PC-9 (cell line): ENCODE measurements at regions of chr4 and their contacts with region 1.

Region 1: DNA sequence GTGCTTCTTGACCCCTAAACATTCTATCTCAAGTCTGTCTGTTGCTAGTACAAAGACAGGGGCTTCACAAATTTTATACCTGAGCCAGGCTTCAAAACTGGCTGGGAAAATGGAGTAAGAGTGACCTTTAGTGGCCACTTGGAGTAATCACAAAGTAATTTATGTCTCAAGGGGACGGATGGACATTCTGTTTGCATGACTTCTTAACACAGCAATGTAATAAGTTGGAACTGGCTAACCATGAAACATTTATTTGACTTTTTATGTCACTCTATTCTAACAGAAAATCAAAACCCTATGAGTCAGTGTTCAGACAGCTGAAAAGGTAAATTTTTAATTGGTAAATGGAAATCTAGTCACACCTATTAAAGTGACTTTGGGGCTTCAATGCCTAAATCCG is 600.6 kb downstream of the ANKRD50 start:
- DNase-seq: peak in 1 of 2 experiments; percentile 64
- H3K4me3 ChIP-seq: no peak overlapping the region
- H3K27ac ChIP-seq: no peak overlapping the region
- H3K4me1 ChIP-seq: no peaks in the 10 kb centered on the region
- H3K27me3 ChIP-seq: no peaks in the 10 kb centered on the region
- CTCF ChIP-seq: peak; percentile 91

Region 2: DNA sequence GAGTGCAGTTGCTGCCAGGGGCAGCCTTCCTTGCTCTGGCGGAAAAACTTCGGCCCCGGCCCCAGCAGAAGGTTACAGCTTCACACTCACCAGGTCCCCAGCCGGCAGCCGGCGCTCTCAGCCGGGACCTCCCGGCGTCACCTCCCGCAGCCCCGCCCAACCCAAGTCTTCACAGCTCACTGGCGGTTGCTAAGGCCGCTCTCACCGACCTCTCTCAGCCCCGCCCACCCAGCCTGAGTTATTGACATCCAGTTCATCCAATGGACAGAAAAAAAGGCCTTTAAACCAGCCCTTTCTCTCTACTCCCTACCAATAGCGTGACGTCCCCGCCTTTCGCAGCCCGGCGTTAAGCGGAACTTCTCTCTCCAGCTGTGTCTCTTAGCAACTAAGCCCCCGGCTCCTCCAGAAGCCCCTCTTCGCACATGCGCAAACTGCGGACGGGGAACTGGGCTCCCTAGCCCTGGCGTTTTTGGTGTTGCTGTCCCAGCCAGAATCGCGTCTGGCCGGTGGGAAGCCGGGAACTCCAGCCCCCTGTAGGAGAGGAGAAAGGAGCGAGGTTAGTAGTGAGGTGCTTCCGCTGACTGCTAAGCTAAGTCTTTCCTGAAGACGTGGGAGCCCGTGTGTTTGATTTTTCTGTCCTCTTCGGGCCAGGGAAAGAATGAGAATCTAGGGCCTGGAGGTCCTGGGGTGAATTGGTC is 1379.4 kb before region 1 on chr4 and contains the start of gene BBS12:
- CTCF ChIA-PET with region 1: no interaction called
- POLR2A ChIA-PET with region 1: no interaction called
- intact Hi-C with region 1: loop called (anchors 10 kb)
- DNase-seq: peak; percentile 99
- H3K4me3 ChIP-seq: peak within 1 kb of the TSS; percentile 62
- H3K27ac ChIP-seq: peak within 1 kb of the TSS; percentile 47
- H3K4me1 ChIP-seq: peaks cover 19% of the 10 kb centered on the region
- H3K27me3 ChIP-seq: no peaks in the 10 kb centered on the region
- CTCF ChIP-seq: no peak; the same call in 1 of the 2 replicates
- total RNA-seq, gene BBS12: 2.9 and 4.9 TPM in 2 replicates

Region 3: DNA sequence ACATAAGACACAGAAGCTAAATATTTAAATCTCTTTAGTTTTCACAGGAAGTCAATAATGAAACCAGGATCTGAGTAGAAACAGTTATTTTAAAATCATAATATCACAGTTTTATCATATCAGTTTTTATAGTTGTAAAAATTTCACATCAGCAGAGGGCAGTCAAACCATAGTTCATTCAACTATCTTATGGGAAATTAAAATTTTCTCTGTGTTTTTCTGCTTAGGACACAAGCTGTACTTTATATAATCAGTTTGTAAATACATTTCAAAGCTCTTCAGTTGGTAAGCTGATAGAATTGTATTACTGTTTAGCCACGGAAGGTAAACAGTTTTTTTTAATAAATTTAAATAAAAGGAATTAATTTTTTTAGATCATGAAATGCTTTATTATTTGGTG is 984.7 kb before region 1 on chr4:
- CTCF ChIA-PET with region 1: no interaction called
- POLR2A ChIA-PET with region 1: no interaction called
- intact Hi-C with region 1: loop called (anchors 5 kb)
- DNase-seq: peak in 1 of 2 experiments; percentile 30
- H3K4me3 ChIP-seq: no peak overlapping the region
- H3K27ac ChIP-seq: no peak overlapping the region
- H3K4me1 ChIP-seq: peaks cover 4% of the 10 kb centered on the region; the same call in 1 of the 2 replicates
- H3K27me3 ChIP-seq: no peaks in the 10 kb centered on the region
- CTCF ChIP-seq: peak; percentile 62

Region 4: GRCh38 chr4:123396307-123397143 is 715.4 kb before region 1 on chr4 and contains the start of gene SPRY1:
- CTCF ChIA-PET with region 1: no interaction called
- POLR2A ChIA-PET with region 1: no interaction called
- intact Hi-C with region 1: loop called (anchors 5 kb)
- DNase-seq: peak; percentile 83 to 92
- H3K4me3 ChIP-seq: peak within 1 kb of the TSS; percentile 86
- H3K27ac ChIP-seq: peak within 1 kb of the TSS; percentile 83
- H3K4me1 ChIP-seq: peaks cover 17% of the 10 kb centered on the region
- H3K27me3 ChIP-seq: no peaks in the 10 kb centered on the region
- CTCF ChIP-seq: no peak
- total RNA-seq, gene SPRY1: 13.1 and 18.3 TPM in 2 replicates

Region 5: GRCh38 chr4:123966990-123967769 is 144.7 kb before region 1 on chr4:
- CTCF ChIA-PET with region 1: no interaction called
- POLR2A ChIA-PET with region 1: no interaction called
- intact Hi-C with region 1: no loop called
- DNase-seq: no peak
- H3K4me3 ChIP-seq: no peak overlapping the region
- H3K27ac ChIP-seq: no peak overlapping the region
- H3K4me1 ChIP-seq: no peaks in the 10 kb centered on the region
- H3K27me3 ChIP-seq: no peaks in the 10 kb centered on the region
- CTCF ChIP-seq: no peak

Region 6: GRCh38 chr4:124322234-124323065 is 210.5 kb after region 1 on chr4:
- CTCF ChIA-PET with region 1: no interaction called
- POLR2A ChIA-PET with region 1: no interaction called
- intact Hi-C with region 1: loop called (anchors 5 kb)
- DNase-seq: no peak
- H3K4me3 ChIP-seq: no peak overlapping the region
- H3K27ac ChIP-seq: no peak overlapping the region
- H3K4me1 ChIP-seq: no peaks in the 10 kb centered on the region
- H3K27me3 ChIP-seq: no peaks in the 10 kb centered on the region
- CTCF ChIP-seq: peak; percentile 82